ENCODE measurements at regions of chr21 and their contacts with region 1.

Region 1: GRCh38 chr21:30268608-30269240 is 14.0 kb downstream of the KRTAP24-1 start:
- DNase-seq: no peak
- H3K4me3 ChIP-seq: no peak overlapping the region
- H3K27ac ChIP-seq: no peak overlapping the region
- H3K4me1 ChIP-seq: no peaks in the 10 kb centered on the region
- H3K27me3 ChIP-seq: no peaks in the 10 kb centered on the region
- CTCF ChIP-seq: no peak
- POLR2A ChIP-seq: no peak

Region 2: DNA sequence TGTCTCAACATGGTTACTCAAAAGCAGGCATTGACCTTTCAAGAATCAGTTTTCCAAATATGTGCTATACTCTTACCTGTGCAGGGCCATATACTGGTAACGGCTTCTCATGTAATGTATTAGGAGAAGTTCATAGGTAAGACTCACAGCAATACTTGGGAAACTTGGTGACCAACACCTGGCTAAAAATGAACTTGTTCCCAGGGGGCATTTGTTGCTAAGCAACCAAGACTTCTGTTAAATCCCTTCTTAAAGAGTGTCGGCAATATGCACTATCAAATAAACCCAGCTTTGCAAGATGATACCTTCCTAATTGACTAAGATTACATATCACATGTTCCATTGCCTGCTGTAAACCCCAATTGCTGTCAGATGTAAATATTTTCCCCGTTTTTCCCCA is 14.7 kb after region 1 on chr21:
- intact Hi-C with region 1: loop called (anchors 1 kb)
- DNase-seq: no peak
- H3K4me3 ChIP-seq: no peak overlapping the region
- H3K27ac ChIP-seq: no peak overlapping the region
- H3K4me1 ChIP-seq: no peaks in the 10 kb centered on the region
- H3K27me3 ChIP-seq: no peaks in the 10 kb centered on the region
- CTCF ChIP-seq: no peak
- POLR2A ChIP-seq: no peak

Region 3: DNA sequence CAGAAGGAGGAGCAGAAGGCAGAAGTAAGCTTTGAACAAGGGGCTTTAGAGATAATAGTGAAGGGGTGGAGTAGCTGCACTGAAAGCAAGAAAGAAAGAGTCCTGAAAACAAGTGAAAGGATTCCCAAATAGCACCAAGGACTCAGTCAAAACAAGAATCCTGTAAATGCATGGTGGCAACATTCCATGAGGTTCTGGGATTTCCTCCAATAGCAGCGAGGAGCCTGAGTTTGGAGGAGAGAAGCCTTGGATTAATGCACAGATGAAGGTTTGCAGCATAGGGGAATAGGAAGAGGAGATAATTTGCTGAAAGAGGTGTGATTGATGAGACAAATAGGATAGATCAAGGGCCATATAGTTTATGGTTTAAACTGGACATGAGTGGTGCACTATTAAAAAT is 310.6 kb after region 1 on chr21:
- intact Hi-C with region 1: no loop called
- DNase-seq: no peak
- H3K4me3 ChIP-seq: no peak overlapping the region
- H3K27ac ChIP-seq: no peak overlapping the region
- H3K4me1 ChIP-seq: no peaks in the 10 kb centered on the region
- H3K27me3 ChIP-seq: no peaks in the 10 kb centered on the region
- CTCF ChIP-seq: no peak
- POLR2A ChIP-seq: no peak

Measured in breast epithelium (tissue), 4 donors.